ENCODE measurements at regions of chr1 and their contacts with region 1.

Region 1: DNA sequence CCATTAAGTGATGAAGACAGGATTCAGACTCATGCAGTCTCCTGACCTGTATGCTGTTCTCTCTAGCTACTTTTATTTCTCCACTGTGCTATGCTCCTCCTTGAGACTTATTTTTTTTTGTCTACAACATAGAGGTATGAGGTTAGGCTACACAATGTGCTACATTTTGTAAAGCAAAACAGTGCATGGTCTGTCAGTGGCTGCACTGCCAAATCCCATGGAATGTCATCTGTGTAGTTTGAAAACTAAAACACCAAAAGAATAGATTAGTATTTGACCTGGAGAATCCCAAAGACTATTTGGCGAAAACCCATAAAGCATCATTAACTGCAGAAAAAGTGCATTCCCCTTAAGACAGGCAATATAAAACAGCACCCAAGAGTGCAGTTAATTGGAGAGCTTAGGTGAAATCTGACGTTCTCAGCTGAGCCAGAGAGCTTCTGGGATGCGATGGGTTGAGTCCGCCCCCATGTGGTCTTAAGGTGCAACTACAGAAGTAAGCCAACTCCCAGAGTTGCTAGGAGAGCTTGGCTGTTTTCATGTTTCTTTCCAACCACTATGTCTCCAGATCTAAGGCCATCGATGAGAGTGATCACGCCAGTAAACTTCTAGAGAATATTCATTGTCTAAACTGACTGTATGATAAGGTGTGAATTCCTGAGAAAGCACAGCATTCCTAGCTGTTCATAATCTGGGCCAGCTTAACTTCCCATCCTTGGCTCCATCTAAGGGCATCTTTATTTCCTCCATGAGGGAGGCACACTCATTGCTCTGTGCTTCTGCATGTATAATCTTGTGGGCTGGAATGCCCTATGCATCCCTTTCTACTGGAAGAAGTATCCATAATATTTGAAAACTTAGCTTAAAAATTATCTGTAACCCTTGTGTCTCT is 20.7 kb upstream of the CYP2J2 start:
- DNase-seq: peak in 2 of 3 donors; percentile 57 to 66
- ATAC-seq: peak; percentile 98 to 100 (median 99)
- H3K4me3 ChIP-seq: no peak overlapping the region
- H3K27ac ChIP-seq: no peak overlapping the region
- H3K4me1 ChIP-seq: no peaks in the 10 kb centered on the region
- H3K27me3 ChIP-seq: no peaks in the 10 kb centered on the region
- CTCF ChIP-seq: peak; percentile 90 to 96 (median 91)
- POLR2A ChIP-seq: no peak

Region 2: GRCh38 chr1:59635097-59635496 is 312.2 kb before region 1 on chr1:
- intact Hi-C with region 1: no loop called
- DNase-seq: no peak
- ATAC-seq: no peak
- H3K4me3 ChIP-seq: no peak overlapping the region
- H3K27ac ChIP-seq: no peak overlapping the region
- H3K4me1 ChIP-seq: peaks cover 0 to 15% (median 0%) of the 10 kb centered on the region in 4 donors
- H3K27me3 ChIP-seq: no peaks in the 10 kb centered on the region
- CTCF ChIP-seq: no peak
- POLR2A ChIP-seq: no peak

Region 3: GRCh38 chr1:59879574-59879973 is 67.7 kb before region 1 on chr1:
- intact Hi-C with region 1: no loop called
- DNase-seq: peak; percentile 62 to 76 (median 66)
- ATAC-seq: peak; percentile 95 to 97 (median 96)
- H3K4me3 ChIP-seq: no peak overlapping the region
- H3K27ac ChIP-seq: peak overlapping the region in 1 of 3 donors; percentile 30
- H3K4me1 ChIP-seq: peaks cover 0 to 15% (median 4%) of the 10 kb centered on the region in 4 donors
- H3K27me3 ChIP-seq: no peaks in the 10 kb centered on the region
- CTCF ChIP-seq: peak; percentile 57 to 75 (median 70)
- POLR2A ChIP-seq: no peak

Region 4: DNA sequence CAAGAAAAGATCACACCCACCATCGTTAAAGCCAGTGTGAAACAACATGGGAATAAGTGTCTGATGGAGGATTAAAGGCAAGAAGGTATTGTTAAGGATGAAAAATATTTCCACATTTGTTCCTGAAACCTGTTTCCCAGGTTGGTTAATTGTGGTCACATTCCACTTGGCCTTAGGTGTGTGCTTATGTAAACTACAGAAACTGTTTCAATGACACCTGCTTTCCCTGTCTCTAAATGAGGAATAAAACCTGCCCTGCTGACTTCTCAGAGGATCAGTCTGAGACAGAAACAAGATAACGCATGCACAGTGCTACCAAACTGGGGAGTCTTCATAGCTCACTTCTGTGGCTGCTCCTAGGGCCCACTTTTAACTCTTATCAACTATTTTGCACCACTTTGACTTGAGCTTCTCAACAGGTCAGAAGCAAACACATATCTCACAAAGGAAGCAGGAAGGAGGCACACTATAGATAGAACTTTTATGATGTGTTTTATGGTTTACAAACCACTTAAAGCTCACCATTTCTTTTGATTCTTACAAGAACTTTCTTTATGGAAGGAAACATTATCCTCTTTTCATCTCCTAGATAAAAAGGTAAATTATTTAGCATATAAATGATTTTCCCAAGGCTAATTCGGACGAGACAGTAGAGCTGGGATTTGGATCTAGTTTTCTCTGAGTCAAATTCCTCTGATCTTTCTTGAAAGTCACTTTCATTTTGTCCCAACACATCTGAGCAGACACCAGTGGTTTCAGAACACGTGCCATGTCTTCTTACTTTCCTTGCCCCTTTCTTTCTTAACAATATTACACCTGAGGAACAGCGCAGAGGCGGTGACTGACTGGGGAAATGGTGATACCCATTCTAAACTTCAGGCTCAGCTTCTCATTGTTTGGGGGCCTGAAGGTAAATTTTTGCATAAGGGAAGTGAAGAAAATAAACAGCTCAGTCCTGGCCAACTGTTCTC is 54.2 kb before region 1 on chr1:
- intact Hi-C with region 1: loop called in 1 of 2 experiments (anchors 5 kb)
- DNase-seq: no peak
- ATAC-seq: peak; percentile 35 to 44 (median 40)
- H3K4me3 ChIP-seq: no peak overlapping the region
- H3K27ac ChIP-seq: peak overlapping the region in 1 of 3 donors; percentile 9
- H3K4me1 ChIP-seq: peaks cover 0 to 15% (median 4%) of the 10 kb centered on the region in 4 donors
- H3K27me3 ChIP-seq: no peaks in the 10 kb centered on the region
- CTCF ChIP-seq: no peak
- POLR2A ChIP-seq: no peak

Region 5: DNA sequence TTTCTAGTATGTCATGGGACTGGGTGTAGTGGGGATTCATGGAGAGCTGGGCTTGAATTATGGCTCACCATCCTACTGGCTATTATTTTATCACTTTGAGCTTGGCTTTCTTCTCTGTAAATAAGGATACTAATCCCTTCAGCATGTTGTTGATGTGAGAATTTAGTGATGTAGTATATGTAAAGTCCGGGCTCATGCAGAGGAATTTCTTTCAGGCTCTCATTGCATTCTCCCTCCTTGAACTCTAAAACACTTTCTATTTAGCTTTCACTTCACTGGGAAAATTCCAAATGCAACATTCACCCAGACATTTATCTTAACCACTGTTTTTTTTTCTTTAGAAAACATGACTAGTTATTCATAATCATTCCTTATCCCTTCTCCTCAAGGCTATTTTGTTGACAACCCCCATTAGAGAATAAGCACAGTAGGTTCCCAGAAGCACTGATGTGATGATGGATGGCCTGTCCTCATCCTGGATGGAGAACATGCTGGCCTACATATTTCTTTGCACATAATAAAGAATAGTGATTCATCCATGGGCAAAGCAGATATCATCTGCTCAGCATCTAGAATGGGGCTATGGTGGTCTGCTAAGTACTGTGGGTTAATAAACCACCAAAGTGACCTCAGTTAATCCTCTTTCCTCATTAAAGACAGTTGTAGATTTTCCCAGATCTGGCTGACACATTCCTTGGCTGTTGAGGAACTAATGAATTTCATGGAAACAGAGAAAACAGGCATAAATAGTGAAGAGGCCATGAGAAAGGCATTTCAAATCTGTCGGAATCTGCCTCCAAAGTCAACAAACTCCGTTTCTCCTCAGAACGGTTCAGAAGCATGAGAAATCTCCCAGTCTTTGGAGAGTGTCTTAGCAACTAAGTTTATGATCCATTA is 47.3 kb after region 1 on chr1:
- intact Hi-C with region 1: no loop called
- DNase-seq: no peak
- ATAC-seq: no peak
- H3K4me3 ChIP-seq: no peak overlapping the region
- H3K27ac ChIP-seq: no peak overlapping the region
- H3K4me1 ChIP-seq: no peaks in the 10 kb centered on the region
- H3K27me3 ChIP-seq: no peaks in the 10 kb centered on the region
- CTCF ChIP-seq: no peak
- POLR2A ChIP-seq: no peak

Measured in right lobe of liver (tissue), 6 donors.